ENCODE measurements at regions of chr15 and their contacts with region 1.

Region 1: DNA sequence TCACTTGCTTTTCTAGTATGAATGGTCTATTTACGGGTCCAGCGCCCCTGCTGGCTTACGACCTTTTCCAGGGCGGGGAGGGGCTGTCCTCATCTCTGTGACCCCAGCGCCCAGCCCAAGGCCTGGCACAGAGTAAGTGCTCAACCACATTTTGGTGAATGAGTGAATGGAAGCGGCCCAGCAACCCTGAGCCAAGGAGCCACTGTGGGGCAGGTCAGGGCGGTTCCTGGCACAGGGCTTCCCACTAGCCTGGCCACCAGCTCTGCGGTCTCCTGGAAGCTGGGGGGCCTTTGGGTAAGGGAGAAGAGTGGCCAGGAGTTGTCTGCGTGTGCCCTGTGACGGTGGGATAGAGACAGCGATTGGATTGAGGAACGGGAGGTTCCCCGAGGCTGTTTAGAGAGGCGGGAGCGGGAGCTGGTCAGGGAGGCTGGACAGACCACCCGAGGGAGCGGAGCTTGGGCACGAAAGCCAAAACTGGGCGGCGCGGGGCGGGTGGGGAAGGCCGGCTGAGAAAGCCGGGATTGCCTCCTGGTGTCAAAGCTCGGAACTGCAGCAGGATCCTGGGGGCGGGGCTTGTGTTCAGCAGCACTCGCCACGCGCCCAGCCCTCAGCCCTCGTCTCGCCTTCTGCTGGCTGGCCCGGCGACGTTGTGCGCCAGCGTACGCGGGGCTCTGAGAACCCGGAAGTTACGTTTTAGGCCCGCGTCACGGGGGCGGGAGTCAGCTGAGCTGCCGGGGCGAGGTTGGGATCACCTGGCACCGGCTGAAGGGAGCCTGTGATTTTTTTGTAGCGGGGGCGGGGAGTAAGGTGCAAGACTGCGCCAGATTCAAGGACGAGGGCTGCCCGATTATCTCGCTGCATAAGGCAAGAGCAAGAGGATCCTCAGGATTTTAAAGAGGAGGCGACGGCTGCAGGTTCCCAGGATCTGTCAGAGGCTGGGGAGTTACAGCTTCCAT is at the start of gene VPS18:
- DNase-seq: peak; percentile 99
- ATAC-seq: peak; percentile 99
- H3K4me3 ChIP-seq: peak within 1 kb of the TSS; percentile 81 to 98 (median 92)
- H3K4me3 Mint-ChIP-seq: peak within 1 kb of the TSS; percentile 99
- H3K27ac ChIP-seq: peak within 1 kb of the TSS; percentile 84 to 91
- H3K27ac Mint-ChIP-seq: peak within 1 kb of the TSS; percentile 94
- H3K4me1 ChIP-seq: peaks cover 18 to 19% of the 10 kb centered on the region in 2 donors
- H3K4me1 Mint-ChIP-seq: peaks cover 28% of the 10 kb centered on the region
- H3K27me3 ChIP-seq: no peaks in the 10 kb centered on the region
- H3K27me3 Mint-ChIP-seq: no peaks in the 10 kb centered on the region
- CTCF ChIP-seq: peak; percentile 88
- total RNA-seq, gene VPS18: 29.6 TPM in 2 replicates

Region 2: GRCh38 chr15:40593588-40594428 is 300.2 kb before region 1 on chr15 and contains the start of gene KNL1:
- CTCF ChIA-PET with region 1: interaction called, 13 read pairs
- POLR2A ChIA-PET with region 1: no interaction called
- intact Hi-C with region 1: loop called (anchors 2 kb)
- DNase-seq: peak; percentile 96
- ATAC-seq: peak; percentile 82
- H3K4me3 ChIP-seq: peak within 1 kb of the TSS; percentile 63 to 92 (median 80)
- H3K4me3 Mint-ChIP-seq: peak within 1 kb of the TSS; percentile 96
- H3K27ac ChIP-seq: peak within 1 kb of the TSS; percentile 89 to 92
- H3K27ac Mint-ChIP-seq: peak within 1 kb of the TSS; percentile 99
- H3K4me1 ChIP-seq: peaks cover 10 to 22% of the 10 kb centered on the region in 2 donors
- H3K4me1 Mint-ChIP-seq: peaks cover 23% of the 10 kb centered on the region
- H3K27me3 ChIP-seq: no peaks in the 10 kb centered on the region
- H3K27me3 Mint-ChIP-seq: no peaks in the 10 kb centered on the region
- CTCF ChIP-seq: no peak
- total RNA-seq, gene KNL1: 3.7 and 4.0 TPM in 2 replicates

Region 3: GRCh38 chr15:40754883-40755811 is 138.9 kb before region 1 on chr15 and contains the start of gene RMDN3:
- CTCF ChIA-PET with region 1: no interaction called
- POLR2A ChIA-PET with region 1: no interaction called
- intact Hi-C with region 1: loop called (anchors 1 kb)
- DNase-seq: peak; percentile 96
- ATAC-seq: peak; percentile 98
- H3K4me3 ChIP-seq: peak within 1 kb of the TSS; percentile 66 to 100 (median 94)
- H3K4me3 Mint-ChIP-seq: peak within 1 kb of the TSS; percentile 93
- H3K27ac ChIP-seq: peak within 1 kb of the TSS; percentile 73 to 89
- H3K27ac Mint-ChIP-seq: peak within 1 kb of the TSS; percentile 93
- H3K4me1 ChIP-seq: peaks cover 8 to 19% of the 10 kb centered on the region in 2 donors
- H3K4me1 Mint-ChIP-seq: peaks cover 23% of the 10 kb centered on the region
- H3K27me3 ChIP-seq: no peaks in the 10 kb centered on the region
- H3K27me3 Mint-ChIP-seq: no peaks in the 10 kb centered on the region
- CTCF ChIP-seq: no peak
- total RNA-seq, gene RMDN3: 22.1 and 24.2 TPM in 2 replicates

Region 4: GRCh38 chr15:40807028-40807887 is 86.8 kb before region 1 on chr15 and contains the starts of genes DNAJC17 and ZFYVE19:
- CTCF ChIA-PET with region 1: no interaction called
- POLR2A ChIA-PET with region 1: interaction called, 3 read pairs
- intact Hi-C with region 1: loop called (anchors 1 kb)
- DNase-seq: peak; percentile 97
- ATAC-seq: peak; percentile 96
- H3K4me3 ChIP-seq: peak within 1 kb of the TSS; percentile 78 to 100 (median 100)
- H3K4me3 Mint-ChIP-seq: peak within 1 kb of the TSS; percentile 99
- H3K27ac ChIP-seq: peak within 1 kb of the TSS; percentile 86 to 95
- H3K27ac Mint-ChIP-seq: peak within 1 kb of the TSS; percentile 98
- H3K4me1 ChIP-seq: peaks cover 12 to 18% of the 10 kb centered on the region in 2 donors
- H3K4me1 Mint-ChIP-seq: peaks cover 24% of the 10 kb centered on the region
- H3K27me3 ChIP-seq: no peaks in the 10 kb centered on the region
- H3K27me3 Mint-ChIP-seq: no peaks in the 10 kb centered on the region
- CTCF ChIP-seq: peak; percentile 11
- total RNA-seq, gene DNAJC17: 46.1 and 52.3 TPM in 2 replicates
- total RNA-seq, gene ZFYVE19: 29.4 and 29.8 TPM in 2 replicates

Region 5: DNA sequence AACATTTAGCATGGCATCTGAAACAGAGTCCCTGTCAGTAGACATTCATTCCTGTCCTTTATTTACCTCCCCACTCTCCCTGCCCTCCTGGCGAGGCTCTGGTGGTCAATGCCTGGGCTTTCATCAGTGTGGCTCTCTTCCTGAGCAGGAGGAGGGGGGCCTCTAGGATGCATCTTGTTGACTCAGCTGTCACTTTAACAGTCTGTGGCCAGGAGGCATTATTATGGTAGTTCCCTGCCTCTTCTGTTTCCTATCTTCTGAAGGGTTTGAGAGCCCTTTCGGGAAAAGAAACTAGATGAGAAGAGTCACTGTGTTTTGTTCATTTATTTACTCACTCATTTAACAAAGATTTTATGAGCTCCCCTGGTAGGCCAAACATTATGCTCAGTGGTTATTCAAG is 63.1 kb before region 1 on chr15:
- CTCF ChIA-PET with region 1: no interaction called
- POLR2A ChIA-PET with region 1: no interaction called
- intact Hi-C with region 1: no loop called
- DNase-seq: no peak
- ATAC-seq: no peak
- H3K4me3 ChIP-seq: no peak overlapping the region
- H3K4me3 Mint-ChIP-seq: no peak overlapping the region
- H3K27ac ChIP-seq: no peak overlapping the region
- H3K27ac Mint-ChIP-seq: no peak overlapping the region
- H3K4me1 ChIP-seq: no peaks in the 10 kb centered on the region
- H3K4me1 Mint-ChIP-seq: no peaks in the 10 kb centered on the region
- H3K27me3 ChIP-seq: no peaks in the 10 kb centered on the region
- H3K27me3 Mint-ChIP-seq: no peaks in the 10 kb centered on the region
- CTCF ChIP-seq: no peak

Region 6: DNA sequence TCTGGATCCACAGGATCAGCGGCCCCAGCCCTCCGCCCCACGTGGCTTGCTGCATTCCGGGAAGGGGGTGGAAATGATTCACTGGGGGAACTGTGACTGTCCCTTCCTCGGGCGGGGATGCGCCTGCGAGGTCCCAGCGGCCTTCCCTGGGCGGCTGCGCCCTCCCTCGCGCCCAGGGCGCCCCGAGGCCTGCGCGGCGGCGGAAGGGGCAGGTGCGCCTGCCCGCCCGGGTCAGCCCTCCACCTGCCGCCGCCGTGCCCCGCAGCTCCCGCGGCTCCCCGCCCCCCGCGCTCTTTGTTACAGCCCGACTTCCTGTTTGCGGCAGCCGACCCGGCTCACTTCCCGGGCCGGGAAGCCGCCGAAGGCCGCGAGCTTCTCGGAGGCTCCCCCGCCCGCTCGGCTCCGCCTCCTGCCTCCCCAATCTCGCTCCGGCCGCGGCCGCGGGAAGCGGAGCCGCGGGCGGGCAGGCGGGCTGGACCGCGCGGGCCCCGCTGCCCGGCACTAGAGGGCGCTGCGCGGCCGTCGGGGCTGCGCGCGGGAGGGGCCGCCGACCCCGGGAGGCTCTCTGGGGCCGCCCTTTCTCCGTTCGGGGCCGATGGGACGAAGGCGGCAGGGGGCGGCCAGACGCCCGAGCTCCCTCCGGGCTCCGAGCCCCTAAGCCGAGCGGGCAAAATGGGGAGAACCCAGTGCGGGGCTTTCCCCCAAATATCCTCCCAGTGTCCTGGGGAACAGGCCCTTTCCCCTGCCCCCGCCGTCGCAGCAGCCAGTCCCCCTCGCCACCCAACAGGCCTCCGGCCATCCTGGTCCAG is 47.7 kb after region 1 on chr15:
- CTCF ChIA-PET with region 1: interaction called, 10 read pairs
- POLR2A ChIA-PET with region 1: no interaction called
- intact Hi-C with region 1: no loop called
- DNase-seq: peak; percentile 82
- ATAC-seq: peak; percentile 85
- H3K4me3 ChIP-seq: peak overlapping the region; percentile 53 to 78 (median 69)
- H3K4me3 Mint-ChIP-seq: peak overlapping the region; percentile 83
- H3K27ac ChIP-seq: peak overlapping the region in 1 of 2 donors; percentile 37
- H3K27ac Mint-ChIP-seq: peak overlapping the region; percentile 75
- H3K4me1 ChIP-seq: peaks cover 31 to 35% of the 10 kb centered on the region in 2 donors
- H3K4me1 Mint-ChIP-seq: peaks cover 40% of the 10 kb centered on the region
- H3K27me3 ChIP-seq: no peaks in the 10 kb centered on the region
- H3K27me3 Mint-ChIP-seq: peaks cover 5% of the 10 kb centered on the region
- CTCF ChIP-seq: peak; percentile 66

Region 7: DNA sequence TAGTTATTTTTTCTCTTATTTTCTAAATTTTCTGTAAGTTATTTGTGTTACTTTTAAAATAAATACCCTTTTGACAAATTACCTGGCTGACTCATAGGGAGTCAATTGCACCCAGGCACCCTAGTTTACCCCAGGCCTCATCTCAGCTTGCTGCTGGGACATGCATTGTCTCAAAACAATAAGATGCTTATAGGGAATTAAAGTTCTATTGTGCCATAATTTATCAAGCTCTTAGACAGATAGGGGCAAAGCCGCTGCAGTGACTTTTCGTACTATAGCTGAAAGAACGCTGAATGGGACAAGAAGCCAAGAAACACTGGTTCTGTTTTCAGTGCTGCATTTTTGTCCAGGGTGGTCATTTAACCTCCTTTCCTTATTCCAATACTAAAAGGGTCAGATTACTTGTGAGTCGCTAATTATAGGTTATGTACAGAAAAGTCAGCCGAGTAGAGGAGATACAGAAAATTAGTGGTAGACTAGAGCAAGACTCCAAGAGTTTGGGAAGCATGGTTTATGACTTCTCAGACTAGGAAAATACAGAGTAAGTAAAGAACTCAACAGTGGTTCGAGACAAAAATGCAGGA is 286.3 kb after region 1 on chr15:
- CTCF ChIA-PET with region 1: interaction called, 29 read pairs
- POLR2A ChIA-PET with region 1: no interaction called
- intact Hi-C with region 1: no loop called
- DNase-seq: no peak
- ATAC-seq: no peak
- H3K4me3 ChIP-seq: no peak overlapping the region
- H3K4me3 Mint-ChIP-seq: no peak overlapping the region
- H3K27ac ChIP-seq: no peak overlapping the region
- H3K27ac Mint-ChIP-seq: no peak overlapping the region
- H3K4me1 ChIP-seq: no peaks in the 10 kb centered on the region
- H3K4me1 Mint-ChIP-seq: peaks cover 3% of the 10 kb centered on the region
- H3K27me3 ChIP-seq: no peaks in the 10 kb centered on the region
- H3K27me3 Mint-ChIP-seq: peaks cover 3% of the 10 kb centered on the region
- CTCF ChIP-seq: no peak

Measured in B cell (primary cell).